ENCODE measurements at regions of chrX and their contacts with region 1.

Region 1: DNA sequence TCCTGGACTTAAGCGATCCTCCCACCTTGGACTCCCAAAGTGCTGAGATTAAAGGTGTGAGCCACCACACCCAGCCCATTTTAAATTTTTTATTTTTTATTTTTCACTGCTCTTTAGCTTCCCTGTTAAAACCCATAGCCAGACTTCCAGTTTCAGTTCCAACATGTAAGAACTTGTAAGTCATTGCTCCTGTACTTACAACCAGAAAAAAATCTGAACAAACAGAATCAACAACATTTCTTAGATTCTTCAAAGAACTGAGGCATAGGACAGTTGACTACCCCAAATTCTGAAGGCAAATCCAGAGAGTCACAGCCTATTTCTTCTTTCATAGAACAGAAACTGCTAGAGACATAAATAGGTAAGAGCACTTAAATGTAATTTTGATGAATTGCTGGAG is 8.1 kb downstream of the GPRASP3 start:
- DNase-seq: no peak
- H3K4me3 ChIP-seq: no peak overlapping the region
- H3K27ac ChIP-seq: no peak overlapping the region
- H3K4me1 ChIP-seq: no peaks in the 10 kb centered on the region
- H3K27me3 ChIP-seq: peaks cover 0 to 39% of the 10 kb centered on the region in 2 donors
- CTCF ChIP-seq: no peak
- POLR2A ChIP-seq: no peak

Region 2: GRCh38 chrX:101078716-101079598 is 1649.7 kb before region 1 on chrX and contains the start of gene TMEM35A:
- intact Hi-C with region 1: no loop called
- DNase-seq: no peak
- H3K4me3 ChIP-seq: peak within 1 kb of the TSS; percentile 37 to 61 (median 42)
- H3K27ac ChIP-seq: no peak within 1 kb of the TSS
- H3K4me1 ChIP-seq: no peaks in the 10 kb centered on the region
- H3K27me3 ChIP-seq: peaks cover 0 to 61% of the 10 kb centered on the region in 2 donors
- CTCF ChIP-seq: no peak
- POLR2A ChIP-seq: no peak
- total RNA-seq, gene TMEM35A: 0.15 to 2.1 (median 0.33) TPM

Region 3: GRCh38 chrX:102535958-102536357 is 192.7 kb before region 1 on chrX:
- intact Hi-C with region 1: no loop called
- DNase-seq: no peak
- H3K4me3 ChIP-seq: no peak overlapping the region
- H3K27ac ChIP-seq: no peak overlapping the region
- H3K4me1 ChIP-seq: no peaks in the 10 kb centered on the region
- H3K27me3 ChIP-seq: peaks cover 0 to 17% of the 10 kb centered on the region in 2 donors
- CTCF ChIP-seq: no peak
- POLR2A ChIP-seq: no peak

Region 4: DNA sequence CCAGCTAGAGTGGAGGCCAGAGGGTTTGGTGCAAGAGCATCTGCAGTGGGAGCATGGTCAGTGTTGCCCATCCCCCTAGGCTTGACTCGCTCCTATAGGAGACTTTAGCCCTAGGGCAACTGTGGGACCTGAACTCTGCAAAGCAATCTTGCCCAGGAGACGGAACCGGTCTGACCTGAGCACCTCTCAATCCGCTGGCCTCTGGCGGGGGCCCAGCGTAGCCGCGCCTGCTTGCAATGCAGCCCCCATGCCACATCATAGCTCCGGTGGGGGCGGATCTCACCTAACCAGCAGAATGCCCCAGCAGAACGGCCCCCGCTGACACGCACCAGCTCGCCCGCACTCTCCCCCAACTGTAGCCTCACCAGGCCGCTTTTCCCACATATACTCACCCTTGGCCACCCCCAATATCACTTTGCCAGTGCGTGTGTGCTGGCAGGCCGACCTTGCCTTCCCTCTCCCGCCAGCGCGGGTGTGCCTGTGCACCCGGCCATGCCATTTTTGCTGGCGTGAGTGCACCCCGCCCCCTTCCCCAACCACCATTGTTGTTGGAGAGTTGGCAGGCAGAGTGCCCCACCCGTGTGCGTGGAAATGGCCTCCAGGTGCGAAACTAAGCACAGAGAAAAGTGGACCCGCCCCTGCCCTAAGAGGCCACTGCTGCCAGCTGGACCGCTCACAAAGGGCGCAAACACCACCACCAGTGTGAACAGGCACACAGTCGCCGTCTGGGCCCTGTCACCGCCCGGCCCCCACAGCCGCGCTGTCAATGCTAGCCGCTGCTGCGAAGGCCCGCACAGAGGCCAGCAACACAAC is 492.1 kb after region 1 on chrX:
- intact Hi-C with region 1: loop called (anchors 5 kb)
- DNase-seq: peak in 1 of 2 donors; percentile 49
- H3K4me3 ChIP-seq: peak overlapping the region in 1 of 3 donors; percentile 52
- H3K27ac ChIP-seq: peak overlapping the region in 1 of 2 donors; percentile 8
- H3K4me1 ChIP-seq: no peaks in the 10 kb centered on the region
- H3K27me3 ChIP-seq: peaks cover 0 to 55% of the 10 kb centered on the region in 2 donors
- CTCF ChIP-seq: no peak
- POLR2A ChIP-seq: no peak

Measured in breast epithelium (tissue), 4 donors.